ENCODE measurements at regions of chr1 and their contacts with region 1.

Region 1: GRCh38 chr1:52502789-52503188 is 50.1 kb downstream of the TUT4 start:
- DNase-seq: no peak
- H3K4me3 ChIP-seq: no peak overlapping the region
- H3K27ac ChIP-seq: no peak overlapping the region
- H3K4me1 ChIP-seq: no peaks in the 10 kb centered on the region
- H3K27me3 ChIP-seq: no peaks in the 10 kb centered on the region
- CTCF ChIP-seq: no peak

Region 2: DNA sequence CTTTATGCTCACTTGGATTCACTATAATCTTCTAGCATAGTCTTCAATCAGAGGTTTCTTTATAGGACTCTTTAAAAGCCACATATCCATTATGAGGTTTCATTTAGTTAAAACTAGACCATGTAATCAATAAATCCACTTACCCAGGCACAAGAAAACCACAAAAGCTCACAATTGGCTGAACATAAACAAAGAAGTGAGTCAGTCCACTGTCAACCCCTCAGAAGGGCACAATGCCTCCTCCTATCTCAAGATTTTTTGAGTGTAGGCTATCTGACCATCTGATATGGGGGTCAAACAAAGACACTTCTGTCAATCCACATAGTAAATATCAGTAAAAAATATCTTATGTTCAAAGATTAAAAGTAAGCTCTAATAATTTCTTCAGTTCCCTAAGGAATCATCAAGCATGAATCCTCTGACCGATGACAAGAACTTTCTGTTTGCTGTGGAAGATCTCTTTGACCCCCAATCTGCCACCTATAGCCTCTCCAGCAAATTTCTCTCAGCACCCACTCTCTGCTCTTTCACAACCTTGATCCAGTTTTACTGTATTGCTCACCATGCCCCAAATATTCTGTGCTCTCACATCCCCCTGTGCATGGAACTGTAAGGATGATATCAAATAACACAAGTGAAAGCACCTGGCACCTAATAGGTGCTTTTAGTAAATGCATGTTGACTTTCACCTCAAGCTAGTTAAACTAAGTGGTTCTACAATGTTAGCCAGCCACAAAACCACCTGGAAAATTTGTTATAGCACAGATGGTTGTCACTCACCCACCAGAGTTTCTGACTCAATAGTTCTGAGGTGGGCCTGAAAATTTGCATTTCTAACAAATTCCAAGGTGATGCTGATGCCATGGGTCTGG is 529.0 kb before region 1 on chr1:
- CTCF ChIA-PET with region 1: no interaction called
- dilution Hi-C with region 1: no loop called
- in situ Hi-C with region 1: no loop called
- intact Hi-C with region 1: no loop called
- DNase-seq: no peak
- H3K4me3 ChIP-seq: no peak overlapping the region
- H3K27ac ChIP-seq: no peak overlapping the region
- H3K4me1 ChIP-seq: peaks cover 3% of the 10 kb centered on the region
- H3K27me3 ChIP-seq: no peaks in the 10 kb centered on the region
- CTCF ChIP-seq: no peak

Region 3: GRCh38 chr1:52460694-52461093 is 42.1 kb before region 1 on chr1:
- CTCF ChIA-PET with region 1: no interaction called
- dilution Hi-C with region 1: no loop called
- in situ Hi-C with region 1: no loop called
- intact Hi-C with region 1: loop called (anchors 2 kb)
- DNase-seq: peak; percentile 59
- H3K4me3 ChIP-seq: no peak overlapping the region
- H3K27ac ChIP-seq: no peak overlapping the region
- H3K4me1 ChIP-seq: no peaks in the 10 kb centered on the region
- H3K27me3 ChIP-seq: no peaks in the 10 kb centered on the region
- CTCF ChIP-seq: no peak

Measured in mammary epithelial cell (primary cell).